MCF 10A (cell line): ENCODE measurements at regions of chr7 and their contacts with region 1.

Region 1: DNA sequence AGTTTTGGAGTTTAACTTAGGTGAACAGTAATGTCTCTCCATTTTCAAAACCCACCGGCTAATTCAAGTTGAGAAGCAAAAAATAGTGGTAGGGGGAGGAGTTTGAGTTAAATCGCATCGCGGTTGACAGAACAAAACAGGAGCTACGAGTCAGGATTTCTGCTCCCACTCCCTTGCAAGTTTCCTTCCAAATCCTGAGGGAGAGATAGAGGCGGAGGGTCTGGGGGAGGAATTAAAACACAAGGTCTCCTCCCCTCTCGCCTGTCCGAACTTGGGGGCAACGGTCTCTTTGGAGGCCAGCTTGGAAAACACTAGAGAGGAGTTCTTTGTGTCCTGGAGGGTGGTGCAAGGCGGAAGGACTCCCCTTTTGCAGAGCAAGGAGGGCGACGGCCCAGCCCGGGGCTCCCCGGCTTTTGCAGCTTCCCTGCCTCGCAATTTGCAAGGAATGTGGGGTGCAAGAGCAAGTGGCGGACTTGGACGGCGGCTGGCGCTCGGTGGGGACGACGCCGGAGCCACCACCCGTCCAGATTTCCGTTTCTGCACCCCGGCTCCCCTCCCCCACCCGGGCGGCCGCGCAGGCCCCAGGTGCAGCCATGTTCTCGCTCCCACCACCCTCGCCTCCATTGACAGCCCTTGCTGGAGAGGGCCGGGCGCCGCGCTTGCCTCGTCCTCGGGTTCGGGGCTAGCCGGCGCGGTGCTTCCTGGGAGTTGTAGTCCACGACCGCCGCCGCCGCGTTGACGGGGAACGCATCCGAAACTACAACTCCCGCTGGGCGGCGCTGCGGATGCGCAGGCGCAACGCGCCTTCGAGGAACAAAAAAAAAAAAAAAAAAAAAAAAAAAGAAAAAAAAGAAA is 454 bp upstream of the GTF2I start:
- DNase-seq: peak; percentile 97
- H3K4me3 Mint-ChIP-seq: peak overlapping the region; percentile 76
- H3K27ac Mint-ChIP-seq: peak overlapping the region; percentile 82
- H3K4me1 Mint-ChIP-seq: peaks cover 25% of the 10 kb centered on the region
- H3K27me3 Mint-ChIP-seq: no peaks in the 10 kb centered on the region
- CTCF ChIP-seq: peak; percentile 5

Region 2: GRCh38 chr7:74449809-74450397 is 207.2 kb before region 1 on chr7:
- CTCF ChIA-PET with region 1: no interaction called
- POLR2A ChIA-PET with region 1: interaction called, 5 read pairs
- intact Hi-C with region 1: loop called (anchors 2 kb)
- DNase-seq: peak; percentile 71
- H3K4me3 Mint-ChIP-seq: no peak overlapping the region
- H3K27ac Mint-ChIP-seq: no peak overlapping the region
- H3K4me1 Mint-ChIP-seq: peaks cover 7% of the 10 kb centered on the region
- H3K27me3 Mint-ChIP-seq: no peaks in the 10 kb centered on the region
- CTCF ChIP-seq: peak; percentile 83

Region 3: DNA sequence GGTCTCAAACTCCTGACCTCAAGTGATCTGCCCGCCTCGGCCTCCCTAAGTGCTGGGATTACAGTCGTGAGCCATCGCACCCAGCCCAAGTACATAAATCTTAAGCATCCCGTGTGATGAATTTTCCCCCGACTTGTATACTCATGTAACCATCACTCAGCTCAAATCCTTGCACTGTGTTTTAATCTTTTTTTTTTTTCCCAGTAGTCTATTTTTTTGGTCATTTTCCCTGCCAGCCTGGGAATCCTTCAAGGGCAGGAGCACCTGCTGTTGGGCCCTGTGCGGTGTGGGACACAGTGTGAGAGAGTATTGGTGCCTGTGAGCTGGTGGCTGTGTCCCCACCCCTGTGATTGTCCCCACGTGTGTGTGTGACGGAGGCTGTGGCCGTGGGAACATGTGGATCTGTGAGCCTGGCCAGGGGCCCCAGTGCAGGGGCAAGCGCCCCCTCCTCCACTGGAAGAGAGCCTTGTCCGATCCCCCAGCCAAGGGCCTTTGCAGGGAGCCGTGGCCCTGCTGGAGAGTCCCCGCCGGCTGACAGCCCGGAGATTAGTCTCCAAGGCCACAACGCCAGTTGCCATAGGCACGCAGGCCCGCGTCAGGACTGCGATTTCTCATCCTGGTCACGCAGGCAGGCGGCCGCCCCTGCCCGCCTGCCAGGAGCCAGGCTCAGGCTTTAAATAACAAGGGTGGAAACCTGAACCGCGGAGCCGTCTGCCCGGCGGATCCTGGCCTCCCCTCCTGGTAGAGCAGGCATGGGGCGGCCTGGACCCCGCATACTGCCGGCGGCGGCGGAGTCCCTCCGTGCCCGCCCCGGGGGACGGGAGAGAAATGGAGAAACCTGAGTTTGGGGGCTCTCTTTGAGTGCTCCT is 176.9 kb before region 1 on chr7:
- CTCF ChIA-PET with region 1: interaction called, 3 read pairs
- POLR2A ChIA-PET with region 1: interaction called, 6 read pairs
- intact Hi-C with region 1: loop called (anchors 5 kb)
- DNase-seq: peak; percentile 81
- H3K4me3 Mint-ChIP-seq: peak overlapping the region; percentile 72
- H3K27ac Mint-ChIP-seq: peak overlapping the region; percentile 98
- H3K4me1 Mint-ChIP-seq: peaks cover 56% of the 10 kb centered on the region
- H3K27me3 Mint-ChIP-seq: no peaks in the 10 kb centered on the region
- CTCF ChIP-seq: no peak

Region 4: DNA sequence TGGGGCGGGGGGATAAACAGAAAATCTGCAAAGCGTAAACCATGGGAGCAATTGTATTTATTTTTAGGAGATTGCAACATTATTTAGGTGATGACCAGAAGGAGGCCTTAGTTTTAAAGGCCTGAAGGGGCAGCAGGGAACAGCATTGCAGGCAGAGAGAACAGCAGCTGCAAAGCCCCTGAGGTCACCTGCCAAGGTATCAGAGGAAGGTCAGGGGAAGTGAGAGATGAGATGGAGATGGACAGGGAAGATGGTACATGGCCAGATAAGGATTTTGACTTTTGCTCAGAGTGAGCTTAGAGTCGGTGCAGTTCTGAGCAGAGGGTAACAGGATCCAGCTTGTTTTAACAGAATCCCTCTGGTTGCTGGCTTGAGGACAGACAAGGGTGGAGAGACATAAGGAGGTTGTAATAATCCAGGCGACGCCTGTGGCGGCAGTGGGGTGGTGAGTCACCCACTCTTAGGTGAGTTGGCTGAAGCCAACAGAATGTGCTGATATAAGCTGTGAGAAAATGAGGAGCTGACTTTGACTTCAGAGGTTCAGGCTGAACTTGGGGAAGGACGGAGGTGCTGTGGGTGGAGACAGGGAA is 81.8 kb before region 1 on chr7:
- CTCF ChIA-PET with region 1: no interaction called
- POLR2A ChIA-PET with region 1: interaction called, 15 read pairs
- intact Hi-C with region 1: no loop called
- DNase-seq: peak; percentile 94
- H3K4me3 Mint-ChIP-seq: peak overlapping the region; percentile 4
- H3K27ac Mint-ChIP-seq: peak overlapping the region; percentile 57
- H3K4me1 Mint-ChIP-seq: peaks cover 13% of the 10 kb centered on the region
- H3K27me3 Mint-ChIP-seq: no peaks in the 10 kb centered on the region
- CTCF ChIP-seq: no peak

Region 5: DNA sequence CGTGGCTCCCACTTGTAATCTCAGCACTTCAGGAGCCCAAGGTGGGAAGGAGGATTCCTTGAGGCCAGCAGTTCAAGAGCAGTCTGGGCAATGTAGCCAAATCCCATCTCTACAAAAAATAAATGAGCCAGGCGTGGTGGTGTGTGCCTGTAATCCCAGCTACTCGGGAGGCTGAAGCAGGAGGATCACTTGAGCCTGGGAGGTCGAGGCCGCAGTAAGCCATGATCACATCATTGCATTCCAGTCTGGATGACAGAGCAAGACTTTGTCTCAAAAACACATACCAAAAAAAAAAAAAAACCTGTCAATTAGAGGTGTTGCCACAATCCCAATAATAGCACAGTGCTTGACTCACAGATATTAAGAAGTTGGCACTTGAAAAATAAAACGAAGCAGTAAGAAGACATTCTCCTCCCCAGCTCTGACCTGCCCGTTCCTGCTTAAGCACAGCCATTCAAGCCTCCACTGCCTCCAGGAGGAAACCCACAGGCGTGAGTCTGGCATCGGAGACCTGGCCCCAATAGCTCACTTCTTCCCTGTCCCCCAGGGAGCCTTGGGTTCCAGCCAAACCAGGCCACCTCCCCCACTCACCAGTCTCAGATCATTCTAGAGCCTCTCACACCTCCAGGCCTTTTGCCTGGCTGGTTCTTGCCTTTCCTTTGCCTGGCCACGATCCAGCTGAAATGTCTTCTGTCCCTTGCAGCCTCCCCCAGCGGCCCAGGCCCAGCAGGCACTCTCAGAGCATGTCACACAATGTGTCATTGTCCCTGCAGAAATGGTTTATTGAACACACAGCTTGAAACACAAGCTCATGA is 44.8 kb before region 1 on chr7:
- CTCF ChIA-PET with region 1: interaction called, 3 read pairs
- POLR2A ChIA-PET with region 1: interaction called, 56 read pairs
- intact Hi-C with region 1: no loop called
- DNase-seq: peak; percentile 85
- H3K4me3 Mint-ChIP-seq: peak overlapping the region; percentile 51
- H3K27ac Mint-ChIP-seq: peak overlapping the region; percentile 86
- H3K4me1 Mint-ChIP-seq: peaks cover 20% of the 10 kb centered on the region
- H3K27me3 Mint-ChIP-seq: no peaks in the 10 kb centered on the region
- CTCF ChIP-seq: no peak

Region 6: GRCh38 chr7:74633451-74633921 is 23.6 kb before region 1 on chr7:
- CTCF ChIA-PET with region 1: interaction called, 3 read pairs
- POLR2A ChIA-PET with region 1: interaction called, 31 read pairs
- intact Hi-C with region 1: loop called (anchors 1 kb)
- DNase-seq: no peak
- H3K4me3 Mint-ChIP-seq: no peak overlapping the region
- H3K27ac Mint-ChIP-seq: no peak overlapping the region
- H3K4me1 Mint-ChIP-seq: peaks cover 11% of the 10 kb centered on the region
- H3K27me3 Mint-ChIP-seq: no peaks in the 10 kb centered on the region
- CTCF ChIP-seq: no peak

Region 7: GRCh38 chr7:74672343-74672915 is 15.4 kb after region 1 on chr7:
- CTCF ChIA-PET with region 1: no interaction called
- POLR2A ChIA-PET with region 1: interaction called, 11 read pairs
- intact Hi-C with region 1: no loop called
- DNase-seq: no peak
- H3K4me3 Mint-ChIP-seq: no peak overlapping the region
- H3K27ac Mint-ChIP-seq: no peak overlapping the region
- H3K4me1 Mint-ChIP-seq: no peaks in the 10 kb centered on the region
- H3K27me3 Mint-ChIP-seq: no peaks in the 10 kb centered on the region
- CTCF ChIP-seq: no peak